CD8-positive, alpha-beta memory T cell (primary cell): ENCODE measurements at regions of chr12 and their contacts with region 1.

Region 1: DNA sequence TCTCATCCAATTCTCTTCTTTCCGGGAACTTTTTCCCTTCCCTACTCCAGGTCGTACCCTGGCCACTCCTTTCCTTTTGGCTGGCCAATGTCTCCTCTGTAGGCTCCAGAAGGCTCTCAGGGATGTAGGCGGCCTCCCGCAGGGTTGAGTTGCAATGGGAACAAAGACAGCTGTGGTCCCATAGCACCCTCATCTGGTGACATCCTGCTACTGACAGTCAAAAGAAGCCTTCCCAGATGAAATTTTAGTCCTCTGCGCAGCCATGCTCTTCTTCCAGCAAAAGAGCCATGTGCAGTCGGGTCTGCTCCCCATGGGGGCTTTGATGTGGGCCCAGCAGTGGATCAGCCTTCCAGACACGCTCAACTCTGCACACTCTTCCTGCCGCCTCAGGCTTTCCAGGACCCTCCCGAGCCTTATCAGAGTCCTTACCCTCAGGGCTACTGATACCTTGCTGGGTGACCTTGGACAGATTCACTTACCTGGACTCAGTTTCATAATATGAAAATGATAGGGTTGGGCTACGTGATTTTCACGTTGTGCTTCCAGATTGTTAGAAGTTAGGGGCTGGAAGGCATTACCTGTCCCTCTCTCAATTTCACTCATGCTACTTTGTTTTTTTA is 5.5 kb upstream of the CELA1 start:
- DNase-seq: peak in 4 of 5 donors; percentile 30 to 58 (median 41)
- H3K4me3 ChIP-seq: no peak overlapping the region
- H3K4me3 Mint-ChIP-seq: no peak overlapping the region
- H3K27ac ChIP-seq: no peak overlapping the region
- H3K27ac Mint-ChIP-seq: peak overlapping the region in 3 of 8 donors; percentile 23 to 43 (median 40)
- H3K4me1 ChIP-seq: no peaks in the 10 kb centered on the region
- H3K4me1 Mint-ChIP-seq: peaks cover 0 to 4% (median 3%) of the 10 kb centered on the region in 3 donors
- H3K27me3 ChIP-seq: no peaks in the 10 kb centered on the region
- H3K27me3 Mint-ChIP-seq: no peaks in the 10 kb centered on the region

Region 2: GRCh38 chr12:51270067-51270970 is 81.7 kb before region 1 on chr12 and contains the start of gene SMAGP:
- CTCF ChIA-PET with region 1: interaction called, 13 read pairs
- POLR2A ChIA-PET with region 1: no interaction called
- DNase-seq: peak; percentile 46 to 70 (median 49)
- H3K4me3 ChIP-seq: peak within 1 kb of the TSS; percentile 77
- H3K4me3 Mint-ChIP-seq: peak within 1 kb of the TSS; percentile 90 to 97 (median 94)
- H3K27ac ChIP-seq: peak within 1 kb of the TSS; percentile 25
- H3K27ac Mint-ChIP-seq: peak within 1 kb of the TSS; percentile 74 to 97 (median 92)
- H3K4me1 ChIP-seq: peaks cover 20% of the 10 kb centered on the region
- H3K4me1 Mint-ChIP-seq: peaks cover 24 to 37% (median 30%) of the 10 kb centered on the region in 3 donors
- H3K27me3 ChIP-seq: no peaks in the 10 kb centered on the region
- H3K27me3 Mint-ChIP-seq: no peaks in the 10 kb centered on the region
- total RNA-seq, gene SMAGP: 0.72 to 0.84 TPM

Region 3: GRCh38 chr12:51460519-51460918 is 108.5 kb after region 1 on chr12:
- CTCF ChIA-PET with region 1: no interaction called
- POLR2A ChIA-PET with region 1: no interaction called
- DNase-seq: no peak
- H3K4me3 ChIP-seq: no peak overlapping the region
- H3K4me3 Mint-ChIP-seq: no peak overlapping the region
- H3K27ac ChIP-seq: no peak overlapping the region
- H3K27ac Mint-ChIP-seq: no peak overlapping the region
- H3K4me1 ChIP-seq: no peaks in the 10 kb centered on the region
- H3K4me1 Mint-ChIP-seq: no peaks in the 10 kb centered on the region
- H3K27me3 ChIP-seq: no peaks in the 10 kb centered on the region
- H3K27me3 Mint-ChIP-seq: no peaks in the 10 kb centered on the region

Region 4: DNA sequence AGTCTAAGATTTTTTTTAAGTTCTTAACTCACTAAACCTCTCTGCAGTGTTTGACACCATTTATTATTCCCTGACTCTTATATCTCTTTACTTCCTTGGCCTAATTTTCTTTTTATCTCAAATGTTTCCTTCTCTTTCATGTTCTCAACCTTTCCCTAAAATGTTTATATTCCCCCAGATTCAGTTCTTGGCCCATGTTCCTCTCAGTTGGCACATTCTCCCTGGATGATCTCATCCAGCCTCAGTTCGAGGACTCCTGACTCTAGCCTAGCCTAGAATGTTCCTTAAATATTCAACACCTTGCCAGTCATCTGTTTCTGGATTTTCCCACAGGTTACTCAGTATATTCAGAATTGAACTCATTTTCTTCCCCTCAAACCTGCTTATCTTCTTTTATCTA is 320.3 kb after region 1 on chr12:
- CTCF ChIA-PET with region 1: no interaction called
- POLR2A ChIA-PET with region 1: no interaction called
- DNase-seq: no peak
- H3K4me3 ChIP-seq: no peak overlapping the region
- H3K4me3 Mint-ChIP-seq: no peak overlapping the region
- H3K27ac ChIP-seq: no peak overlapping the region
- H3K27ac Mint-ChIP-seq: no peak overlapping the region
- H3K4me1 ChIP-seq: no peaks in the 10 kb centered on the region
- H3K4me1 Mint-ChIP-seq: peaks cover 5 to 11% (median 6%) of the 10 kb centered on the region in 3 donors
- H3K27me3 ChIP-seq: no peaks in the 10 kb centered on the region
- H3K27me3 Mint-ChIP-seq: peaks cover 0 to 10% of the 10 kb centered on the region in 2 donors